H1 (cell line): ENCODE measurements at regions of chr4 and their contacts with region 1.

Region 1: DNA sequence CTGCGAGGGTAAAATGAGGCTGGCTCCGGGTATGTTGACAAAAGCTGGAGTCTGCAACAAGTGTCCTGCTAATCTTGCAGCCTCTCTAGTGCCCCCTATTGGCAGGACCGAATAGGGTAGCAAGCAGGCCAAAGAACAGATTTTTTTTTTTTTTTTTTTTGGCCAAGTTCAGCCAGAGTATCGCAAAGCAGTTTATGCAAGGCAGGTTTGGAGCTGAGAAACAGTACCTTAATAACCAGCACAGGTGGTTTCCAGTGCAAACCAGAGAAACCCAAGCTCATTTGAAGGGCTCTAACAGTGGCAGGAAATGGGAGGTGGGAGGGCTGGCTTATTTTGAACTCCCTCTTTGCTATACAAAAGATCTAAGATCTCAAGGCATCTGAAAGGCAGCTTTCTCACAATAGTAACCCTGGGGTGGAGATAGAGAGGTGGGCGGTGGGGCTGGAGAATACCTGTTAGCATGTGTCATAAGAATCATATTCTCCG is 38.2 kb upstream of the OCIAD2 start:
- DNase-seq: peak in 1 of 2 experiments; percentile 75
- H3K4me3 ChIP-seq: no peak overlapping the region
- H3K27ac ChIP-seq: no peak overlapping the region
- H3K4me1 ChIP-seq: peaks cover 0 to 5% (median 2%) of the 10 kb centered on the region in 4 experiments; a peak in 3 of 7 replicates
- H3K27me3 ChIP-seq: no peaks in the 10 kb centered on the region; a peak in 2 of 7 replicates
- CTCF ChIP-seq: peak; percentile 46 to 64 (median 63)
- EP300 ChIP-seq: no peak
- POLR2A ChIP-seq: no peak
- RAD21 ChIP-seq: peak; percentile 26 to 39; a peak in 3 of 4 replicates

Region 2: GRCh38 chr4:48931459-48931858 is 13.3 kb before region 1 on chr4:
- CTCF ChIA-PET with region 1: interaction called, 47 read pairs
- POLR2A ChIA-PET with region 1: interaction called, 3 read pairs
- DNase-seq: no peak
- H3K4me3 ChIP-seq: no peak overlapping the region
- H3K27ac ChIP-seq: no peak overlapping the region
- H3K4me1 ChIP-seq: no peaks in the 10 kb centered on the region
- H3K27me3 ChIP-seq: no peaks in the 10 kb centered on the region
- CTCF ChIP-seq: no peak
- EP300 ChIP-seq: no peak
- POLR2A ChIP-seq: no peak
- RAD21 ChIP-seq: no peak

Region 3: GRCh38 chr4:48963042-48963679 is 18.4 kb after region 1 on chr4:
- CTCF ChIA-PET with region 1: interaction called, 101 read pairs
- POLR2A ChIA-PET with region 1: no interaction called
- DNase-seq: peak; percentile 27 to 64
- H3K4me3 ChIP-seq: no peak overlapping the region
- H3K27ac ChIP-seq: no peak overlapping the region
- H3K4me1 ChIP-seq: peaks cover 0 to 3% (median under 1%) of the 10 kb centered on the region in 4 experiments; a peak in 2 of 7 replicates
- H3K27me3 ChIP-seq: no peaks in the 10 kb centered on the region
- CTCF ChIP-seq: peak; percentile 75 to 100 (median 96)
- EP300 ChIP-seq: no peak
- POLR2A ChIP-seq: no peak
- RAD21 ChIP-seq: peak; percentile 94